WTC11 (cell line): ENCODE measurements at regions of chr22 and their contacts with region 1.

Region 1: GRCh38 chr22:17368554-17369438 is 464 bp upstream of the CECR2 start:
- DNase-seq: peak; percentile 89
- ATAC-seq: peak; percentile 66
- H3K4me3 Mint-ChIP-seq: peak overlapping the region; percentile 78
- H3K27ac Mint-ChIP-seq: peak overlapping the region; percentile 94
- H3K4me1 Mint-ChIP-seq: peaks cover 45% of the 10 kb centered on the region
- H3K27me3 Mint-ChIP-seq: no peaks in the 10 kb centered on the region
- CTCF ChIP-seq: no peak

Region 2: GRCh38 chr22:17164392-17165024 is 204.3 kb before region 1 on chr22:
- CTCF ChIA-PET with region 1: interaction called, 10 read pairs
- POLR2A ChIA-PET with region 1: no interaction called
- DNase-seq: peak; percentile 21
- ATAC-seq: peak; percentile 81
- H3K4me3 Mint-ChIP-seq: no peak overlapping the region
- H3K27ac Mint-ChIP-seq: no peak overlapping the region
- H3K4me1 Mint-ChIP-seq: peaks cover 6% of the 10 kb centered on the region
- H3K27me3 Mint-ChIP-seq: peaks cover 8% of the 10 kb centered on the region
- CTCF ChIP-seq: peak; percentile 44

Region 3: GRCh38 chr22:17258015-17258787 is 110.6 kb before region 1 on chr22:
- CTCF ChIA-PET with region 1: interaction called, 4 read pairs
- POLR2A ChIA-PET with region 1: interaction called, 10 read pairs
- DNase-seq: peak; percentile 76
- ATAC-seq: peak; percentile 67
- H3K4me3 Mint-ChIP-seq: peak overlapping the region; percentile 55
- H3K27ac Mint-ChIP-seq: peak overlapping the region; percentile 100
- H3K4me1 Mint-ChIP-seq: peaks cover 74% of the 10 kb centered on the region
- H3K27me3 Mint-ChIP-seq: no peaks in the 10 kb centered on the region
- CTCF ChIP-seq: no peak

Region 4: GRCh38 chr22:17266251-17266971 is 102.4 kb before region 1 on chr22:
- CTCF ChIA-PET with region 1: interaction called, 36 read pairs
- POLR2A ChIA-PET with region 1: interaction called, 29 read pairs
- DNase-seq: peak; percentile 81
- ATAC-seq: peak; percentile 66
- H3K4me3 Mint-ChIP-seq: peak overlapping the region; percentile 69
- H3K27ac Mint-ChIP-seq: peak overlapping the region; percentile 96
- H3K4me1 Mint-ChIP-seq: peaks cover 90% of the 10 kb centered on the region
- H3K27me3 Mint-ChIP-seq: no peaks in the 10 kb centered on the region
- CTCF ChIP-seq: no peak

Region 5: DNA sequence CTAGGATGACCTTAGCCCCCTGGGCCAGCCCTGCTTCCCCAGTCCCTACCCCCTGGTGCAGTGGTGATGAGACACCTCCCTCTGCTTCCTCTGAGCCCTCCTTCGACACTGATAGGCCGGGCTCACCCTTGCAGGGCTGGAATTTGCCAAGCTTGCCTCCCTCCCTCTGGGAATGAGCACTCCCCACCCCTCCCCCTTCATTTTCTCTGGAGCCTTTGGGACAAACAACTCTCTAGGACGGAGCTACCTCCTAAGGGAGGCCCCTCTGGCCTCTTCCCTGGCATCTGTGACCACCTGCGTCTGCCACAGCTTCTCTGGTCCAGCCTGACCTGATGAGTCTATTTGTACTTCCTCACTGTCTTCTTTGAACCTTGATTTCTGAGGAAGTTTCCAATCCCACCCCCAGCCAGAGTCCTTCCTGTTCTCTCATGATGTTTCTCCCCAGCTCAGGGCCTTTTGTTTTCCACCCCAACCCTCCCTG is 96.2 kb before region 1 on chr22:
- CTCF ChIA-PET with region 1: interaction called, 36 read pairs
- POLR2A ChIA-PET with region 1: interaction called, 29 read pairs
- DNase-seq: peak; percentile 65
- ATAC-seq: peak; percentile 83
- H3K4me3 Mint-ChIP-seq: peak overlapping the region; percentile 27; the same call in 1 of the 2 replicates
- H3K27ac Mint-ChIP-seq: peak overlapping the region; percentile 98
- H3K4me1 Mint-ChIP-seq: peaks cover 54% of the 10 kb centered on the region
- H3K27me3 Mint-ChIP-seq: no peaks in the 10 kb centered on the region
- CTCF ChIP-seq: no peak

Region 6: DNA sequence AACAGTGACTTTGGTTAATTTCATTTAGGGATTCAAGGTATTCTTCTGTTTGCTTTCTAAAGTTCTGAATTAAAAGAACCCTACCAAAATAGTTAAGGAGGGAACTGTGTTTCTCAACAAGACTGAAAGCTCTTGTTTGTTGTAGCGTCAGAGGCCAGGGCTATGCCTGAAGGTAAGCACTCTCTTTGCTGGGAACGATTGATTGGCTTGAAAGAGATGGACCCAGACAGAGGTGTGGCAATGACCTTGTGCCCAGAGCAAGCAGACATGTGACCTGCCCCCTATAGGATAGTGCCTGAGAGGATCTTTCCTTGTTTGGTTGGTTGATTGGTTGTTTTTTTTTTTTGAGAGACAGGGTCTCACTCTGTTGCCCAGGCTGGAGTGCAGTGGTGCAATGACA is 67.9 kb before region 1 on chr22:
- CTCF ChIA-PET with region 1: no interaction called
- POLR2A ChIA-PET with region 1: no interaction called
- DNase-seq: no peak
- ATAC-seq: no peak
- H3K4me3 Mint-ChIP-seq: no peak overlapping the region
- H3K27ac Mint-ChIP-seq: no peak overlapping the region
- H3K4me1 Mint-ChIP-seq: peaks cover 4% of the 10 kb centered on the region; the same call in 1 of the 2 replicates
- H3K27me3 Mint-ChIP-seq: no peaks in the 10 kb centered on the region
- CTCF ChIP-seq: no peak

Region 7: GRCh38 chr22:17348461-17349113 is 20.2 kb before region 1 on chr22:
- CTCF ChIA-PET with region 1: no interaction called
- POLR2A ChIA-PET with region 1: no interaction called
- DNase-seq: no peak
- ATAC-seq: no peak
- H3K4me3 Mint-ChIP-seq: no peak overlapping the region
- H3K27ac Mint-ChIP-seq: no peak overlapping the region
- H3K4me1 Mint-ChIP-seq: peaks cover 7% of the 10 kb centered on the region
- H3K27me3 Mint-ChIP-seq: no peaks in the 10 kb centered on the region
- CTCF ChIP-seq: no peak